Esophagus muscularis mucosa (tissue), 4 donors: ENCODE measurements at regions of chr20 and their contacts with region 1.

Region 1: GRCh38 chr20:48904365-48905296 is 16.9 kb upstream of the ARFGEF2 start:
- DNase-seq: peak; percentile 93
- H3K4me3 ChIP-seq: no peak overlapping the region
- H3K27ac ChIP-seq: no peak overlapping the region
- H3K4me1 ChIP-seq: peaks cover 3 to 11% (median 6%) of the 10 kb centered on the region in 4 donors
- H3K27me3 ChIP-seq: peaks cover 0 to 8% (median 0%) of the 10 kb centered on the region in 4 donors
- CTCF ChIP-seq: peak; percentile 86 to 92 (median 91)
- EP300 ChIP-seq: no peak
- POLR2A ChIP-seq: no peak

Region 2: DNA sequence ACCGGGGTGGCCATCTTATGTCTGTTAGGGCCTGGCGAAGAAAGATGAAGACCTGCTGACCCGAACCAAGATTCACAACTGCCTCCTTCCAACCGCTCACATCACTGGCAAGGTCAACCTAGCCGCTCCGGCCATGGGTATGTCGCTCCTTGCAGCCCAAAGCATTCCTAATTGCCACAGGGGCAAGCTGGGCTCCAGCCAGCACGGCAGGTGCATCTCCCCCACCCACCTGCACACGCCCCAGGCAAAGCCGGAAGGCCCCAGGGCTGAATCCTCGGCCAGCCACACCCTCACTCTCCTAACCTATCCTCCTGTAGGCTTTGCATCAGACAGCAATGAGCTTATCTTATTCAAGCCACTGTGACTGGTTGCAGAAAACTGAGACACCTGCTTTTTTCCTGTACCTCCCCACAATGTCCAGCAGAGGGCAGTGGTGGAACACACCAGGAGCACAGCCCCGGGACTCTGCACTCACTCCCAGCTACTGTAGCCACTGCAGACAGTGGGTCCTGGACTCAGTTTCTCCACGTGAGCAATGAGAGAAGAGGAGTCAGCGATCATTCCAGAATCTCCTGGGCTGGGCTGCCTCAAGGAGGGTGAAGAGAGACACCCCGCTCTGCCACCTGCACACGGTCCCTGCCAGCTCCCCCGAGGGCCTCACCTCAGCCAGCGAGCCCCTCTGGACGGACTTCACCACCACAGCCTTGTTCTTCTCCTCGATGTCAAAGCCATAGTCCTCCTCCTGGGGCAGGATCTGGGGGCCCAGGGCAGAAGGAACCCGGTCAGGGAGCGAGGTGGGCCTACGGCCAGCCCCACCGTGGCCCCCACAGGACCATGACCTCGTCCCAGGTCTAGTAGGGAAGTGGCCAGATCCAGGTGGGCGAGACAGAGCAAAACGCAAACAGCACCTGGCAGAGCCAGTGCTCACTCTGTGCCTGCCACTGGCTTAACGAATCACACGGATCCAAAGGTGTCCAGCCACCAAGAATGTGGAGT is 246.9 kb before region 1 on chr20:
- intact Hi-C with region 1: loop called (anchors 1 kb)
- DNase-seq: no peak
- H3K4me3 ChIP-seq: no peak overlapping the region
- H3K27ac ChIP-seq: no peak overlapping the region
- H3K4me1 ChIP-seq: peaks cover 0 to 14% (median 6%) of the 10 kb centered on the region in 4 donors
- H3K27me3 ChIP-seq: no peaks in the 10 kb centered on the region
- CTCF ChIP-seq: peak; percentile 93 to 98 (median 96)
- EP300 ChIP-seq: no peak
- POLR2A ChIP-seq: no peak

Region 3: GRCh38 chr20:48875911-48876640 is 28.6 kb before region 1 on chr20:
- intact Hi-C with region 1: no loop called
- DNase-seq: no peak
- H3K4me3 ChIP-seq: no peak overlapping the region
- H3K27ac ChIP-seq: no peak overlapping the region
- H3K4me1 ChIP-seq: peaks cover 0 to 3% (median 0%) of the 10 kb centered on the region in 4 donors
- H3K27me3 ChIP-seq: no peaks in the 10 kb centered on the region
- CTCF ChIP-seq: no peak
- EP300 ChIP-seq: no peak
- POLR2A ChIP-seq: no peak